ENCODE measurements at regions of chr19 and their contacts with region 1.

Region 1: DNA sequence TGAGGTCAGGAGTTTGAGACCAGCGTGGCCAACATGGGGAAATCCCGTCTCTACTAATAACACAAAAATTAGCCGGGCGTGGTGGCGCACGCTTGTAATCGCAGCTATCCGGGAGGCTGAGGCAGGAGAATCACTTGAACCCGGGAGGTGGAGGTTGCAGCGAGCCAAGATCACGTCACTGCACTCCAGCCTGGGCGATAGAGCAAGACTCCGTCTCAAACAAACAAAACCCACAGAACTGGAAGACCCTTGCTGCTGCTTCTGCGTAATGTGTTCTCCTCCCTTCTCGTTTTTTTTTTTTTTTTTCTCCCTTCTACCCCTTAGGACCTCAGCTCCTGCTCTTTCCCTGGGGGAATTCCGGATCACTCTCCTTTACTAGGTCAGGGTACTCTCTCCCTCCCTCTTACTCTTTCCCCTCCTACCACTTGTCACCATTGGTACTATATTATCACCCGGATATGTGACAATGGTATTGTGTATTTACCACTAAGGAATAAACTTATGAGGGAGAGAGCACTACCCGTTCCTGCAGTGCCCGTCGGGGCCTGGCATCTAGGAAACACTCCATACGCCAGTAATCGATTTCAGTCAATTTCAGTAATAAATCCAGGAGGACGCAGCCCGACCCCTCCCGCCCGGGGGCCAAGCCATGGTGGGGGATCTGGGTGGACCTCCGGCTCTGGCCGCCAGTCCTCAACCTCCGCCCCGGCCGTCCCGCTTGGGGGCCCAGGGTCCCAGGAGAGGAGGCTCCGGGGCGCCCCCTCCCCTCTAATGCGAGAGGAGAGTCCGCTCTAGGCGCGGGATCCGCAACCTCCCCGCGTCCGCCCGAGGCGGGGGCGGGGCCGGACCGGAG is 429 bp upstream of the GARRE1 start:
- DNase-seq: peak; percentile 90
- H3K4me3 Mint-ChIP-seq: peak overlapping the region; percentile 89
- H3K27ac Mint-ChIP-seq: peak overlapping the region; percentile 86
- H3K4me1 Mint-ChIP-seq: peaks cover 27% of the 10 kb centered on the region
- H3K27me3 Mint-ChIP-seq: no peaks in the 10 kb centered on the region

Region 2: GRCh38 chr19:34241513-34242337 is 12.2 kb before region 1 on chr19:
- CTCF ChIA-PET with region 1: no interaction called
- POLR2A ChIA-PET with region 1: no interaction called
- intact Hi-C with region 1: no loop called
- DNase-seq: peak; percentile 38
- H3K4me3 Mint-ChIP-seq: no peak overlapping the region
- H3K27ac Mint-ChIP-seq: no peak overlapping the region
- H3K4me1 Mint-ChIP-seq: no peaks in the 10 kb centered on the region
- H3K27me3 Mint-ChIP-seq: no peaks in the 10 kb centered on the region

Region 3: GRCh38 chr19:34276614-34277013 is 22.7 kb after region 1 on chr19:
- CTCF ChIA-PET with region 1: no interaction called
- POLR2A ChIA-PET with region 1: no interaction called
- intact Hi-C with region 1: no loop called
- DNase-seq: no peak
- H3K4me3 Mint-ChIP-seq: no peak overlapping the region
- H3K27ac Mint-ChIP-seq: no peak overlapping the region
- H3K4me1 Mint-ChIP-seq: peaks cover 33% of the 10 kb centered on the region
- H3K27me3 Mint-ChIP-seq: no peaks in the 10 kb centered on the region

Region 4: DNA sequence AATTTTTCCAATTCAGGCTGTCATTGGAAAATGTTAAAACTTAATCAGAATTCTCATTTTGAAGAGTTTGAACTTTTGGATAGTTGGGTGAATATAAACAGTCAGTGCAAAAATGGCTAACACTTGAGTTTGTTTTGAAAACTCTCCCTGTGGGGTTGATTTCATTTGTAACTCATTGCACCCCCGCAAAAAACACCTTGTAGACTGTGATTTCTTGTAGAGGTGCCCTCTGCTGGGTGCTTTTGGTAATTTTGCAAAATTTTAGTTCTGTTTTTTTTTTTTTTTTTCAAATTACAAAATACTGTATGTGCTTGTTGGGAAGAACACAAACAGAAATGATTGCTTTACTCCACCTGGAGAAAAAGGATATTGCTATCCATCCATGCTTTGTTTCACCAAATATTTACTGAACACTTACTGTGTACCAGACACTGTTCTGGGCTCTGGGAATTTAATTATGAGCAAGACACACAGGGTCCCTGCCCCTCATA is 82.9 kb after region 1 on chr19:
- CTCF ChIA-PET with region 1: interaction called, 4 read pairs
- POLR2A ChIA-PET with region 1: no interaction called
- intact Hi-C with region 1: loop called (anchors 2 kb)
- DNase-seq: peak; percentile 51
- H3K4me3 Mint-ChIP-seq: no peak overlapping the region
- H3K27ac Mint-ChIP-seq: no peak overlapping the region
- H3K4me1 Mint-ChIP-seq: peaks cover 6% of the 10 kb centered on the region
- H3K27me3 Mint-ChIP-seq: no peaks in the 10 kb centered on the region

Measured in activated CD4-positive, alpha-beta memory T cell treated with anti-CD3 and anti-CD28 coated beads for 36 hours (primary cell).